Natural killer cell (primary cell): ENCODE measurements at regions of chr1 and their contacts with region 1.

Region 1: GRCh38 chr1:67685067-67685557 is at the start of gene GADD45A:
- DNase-seq: peak; percentile 95 to 98
- ATAC-seq: peak; percentile 85 to 96 (median 90)
- H3K4me3 ChIP-seq: peak within 1 kb of the TSS; percentile 94
- H3K4me3 Mint-ChIP-seq: peak within 1 kb of the TSS; percentile 96
- H3K27ac ChIP-seq: peak within 1 kb of the TSS; percentile 63
- H3K27ac Mint-ChIP-seq: peak within 1 kb of the TSS; percentile 81 to 94
- H3K4me1 ChIP-seq: peaks cover 14% of the 10 kb centered on the region
- H3K4me1 Mint-ChIP-seq: peaks cover 24 to 32% of the 10 kb centered on the region in 2 donors
- H3K27me3 ChIP-seq: no peaks in the 10 kb centered on the region
- H3K27me3 Mint-ChIP-seq: no peaks in the 10 kb centered on the region
- CTCF ChIP-seq: no peak
- total RNA-seq, gene GADD45A: 21.8 to 30.3 (median 26.6) TPM

Region 2: GRCh38 chr1:66924756-66925557 is 760.2 kb before region 1 on chr1 and contains the starts of genes DNAI4 and MIER1:
- intact Hi-C with region 1: loop called (anchors 5 kb)
- DNase-seq: peak; percentile 95 to 98
- ATAC-seq: peak; percentile 94 to 99 (median 94)
- H3K4me3 ChIP-seq: peak within 1 kb of the TSS; percentile 71
- H3K4me3 Mint-ChIP-seq: peak within 1 kb of the TSS; percentile 91
- H3K27ac ChIP-seq: peak within 1 kb of the TSS; percentile 98
- H3K27ac Mint-ChIP-seq: peak within 1 kb of the TSS; percentile 96
- H3K4me1 ChIP-seq: peaks cover 23% of the 10 kb centered on the region
- H3K4me1 Mint-ChIP-seq: peaks cover 27 to 32% of the 10 kb centered on the region in 2 donors
- H3K27me3 ChIP-seq: no peaks in the 10 kb centered on the region
- H3K27me3 Mint-ChIP-seq: no peaks in the 10 kb centered on the region
- CTCF ChIP-seq: no peak
- total RNA-seq, gene DNAI4: 1.4 to 4.3 (median 2.2) TPM
- total RNA-seq, gene MIER1: 87.9 to 94.3 (median 93.2) TPM